Panc1 (cell line): ENCODE measurements at regions of chr6 and their contacts with region 1.

Region 1: GRCh38 chr6:44327096-44327495 is 13.9 kb upstream of the AARS2 start:
- DNase-seq: no peak
- ATAC-seq: no peak
- H3K4me3 ChIP-seq: no peak overlapping the region
- H3K27ac ChIP-seq: no peak overlapping the region
- H3K4me1 ChIP-seq: no peaks in the 10 kb centered on the region
- H3K27me3 ChIP-seq: peaks cover 4% of the 10 kb centered on the region; the same call in 1 of the 2 replicates
- CTCF ChIP-seq: no peak

Region 2: DNA sequence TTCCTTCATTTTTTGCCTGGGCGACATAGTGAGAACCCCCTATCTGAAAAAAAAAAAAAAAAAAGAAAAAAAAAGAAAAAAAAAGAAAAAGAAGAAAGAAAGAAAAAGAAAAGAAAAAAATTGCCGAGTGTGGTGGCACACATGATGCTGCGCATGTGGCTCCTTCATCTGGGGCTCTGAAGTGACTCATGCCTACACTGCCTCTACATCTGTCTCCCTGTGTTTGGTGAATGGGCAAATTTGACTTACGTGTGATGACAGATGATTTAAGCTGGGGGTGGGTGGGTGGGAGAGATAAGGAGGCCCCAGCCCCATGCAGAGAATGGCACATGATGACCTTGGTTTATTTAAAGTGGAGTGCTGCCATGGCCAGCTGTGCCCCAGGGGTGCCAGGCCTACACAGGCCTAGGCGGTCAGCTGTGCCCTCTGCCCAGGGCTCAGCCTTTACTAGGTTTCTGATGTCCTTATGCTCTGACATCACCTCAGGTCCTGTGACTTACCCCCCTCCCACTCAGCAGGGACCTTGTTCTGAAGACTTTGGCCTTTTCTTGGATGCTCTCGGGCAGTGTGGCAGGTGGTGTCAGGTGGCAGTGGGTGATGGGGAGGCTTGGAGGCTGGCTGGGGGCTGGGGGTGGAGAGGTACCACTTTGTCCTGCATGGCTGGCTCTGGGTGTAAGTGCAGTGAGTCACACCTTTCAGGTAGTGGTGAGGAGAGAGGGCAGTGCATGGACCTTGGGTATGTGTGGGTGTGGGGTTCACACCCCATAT is 515.9 kb before region 1 on chr6:
- CTCF ChIA-PET with region 1: no interaction called
- POLR2A ChIA-PET with region 1: interaction called, 11 read pairs
- in situ Hi-C with region 1: no loop called
- intact Hi-C with region 1: no loop called
- DNase-seq: no peak
- ATAC-seq: no peak
- H3K4me3 ChIP-seq: no peak overlapping the region
- H3K27ac ChIP-seq: no peak overlapping the region
- H3K4me1 ChIP-seq: no peaks in the 10 kb centered on the region
- H3K27me3 ChIP-seq: no peaks in the 10 kb centered on the region
- CTCF ChIP-seq: no peak